WTC11 (cell line): ENCODE measurements at regions of chr3 and their contacts with region 1.

Region 1: GRCh38 chr3:45656575-45657363 is 32.4 kb upstream of the SACM1L start:
- DNase-seq: peak; percentile 87
- ATAC-seq: peak; percentile 92
- H3K4me3 Mint-ChIP-seq: no peak overlapping the region
- H3K27ac Mint-ChIP-seq: no peak overlapping the region; the same call in 1 of the 2 replicates
- H3K4me1 Mint-ChIP-seq: peaks cover 21% of the 10 kb centered on the region
- H3K27me3 Mint-ChIP-seq: no peaks in the 10 kb centered on the region
- CTCF ChIP-seq: peak; percentile 85

Region 2: GRCh38 chr3:45507820-45508317 is 148.9 kb before region 1 on chr3:
- CTCF ChIA-PET with region 1: interaction called, 98 read pairs
- POLR2A ChIA-PET with region 1: no interaction called
- DNase-seq: peak; percentile 60
- ATAC-seq: peak; percentile 66
- H3K4me3 Mint-ChIP-seq: no peak overlapping the region
- H3K27ac Mint-ChIP-seq: no peak overlapping the region
- H3K4me1 Mint-ChIP-seq: 0 out of 2 replicates have a peak, but pooled peaks cover 3% of the 10 kb centered on the region
- H3K27me3 Mint-ChIP-seq: no peaks in the 10 kb centered on the region
- CTCF ChIP-seq: 0 out of 2 replicates have a peak, but pooled peaks have one; percentile 13

Region 3: DNA sequence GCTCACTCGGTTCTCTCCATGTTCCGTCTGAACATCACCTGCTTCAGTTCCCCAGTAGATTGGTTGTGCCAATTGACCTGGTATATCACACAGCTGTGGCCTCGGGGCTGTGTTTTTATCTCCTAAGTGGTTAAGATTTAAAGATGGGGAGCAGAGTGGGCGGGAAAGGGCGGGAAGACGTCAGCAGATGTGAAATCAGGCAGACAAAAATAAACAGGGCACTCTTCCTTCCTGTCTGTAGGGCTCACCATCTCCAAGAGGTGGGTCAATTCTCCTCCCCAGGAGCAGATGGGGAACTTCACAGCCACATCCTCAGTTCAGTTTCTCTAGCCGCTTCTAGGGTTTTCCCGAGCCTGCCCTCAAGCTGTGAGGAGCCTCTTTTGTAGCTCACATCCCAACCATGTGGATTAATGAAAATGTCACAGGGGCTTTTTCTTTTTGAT is 89.0 kb before region 1 on chr3:
- CTCF ChIA-PET with region 1: interaction called, 17 read pairs
- POLR2A ChIA-PET with region 1: no interaction called
- DNase-seq: no peak
- ATAC-seq: no peak
- H3K4me3 Mint-ChIP-seq: no peak overlapping the region
- H3K27ac Mint-ChIP-seq: no peak overlapping the region
- H3K4me1 Mint-ChIP-seq: peaks cover 34% of the 10 kb centered on the region
- H3K27me3 Mint-ChIP-seq: peaks cover 3% of the 10 kb centered on the region; the same call in 1 of the 2 replicates
- CTCF ChIP-seq: no peak

Region 4: DNA sequence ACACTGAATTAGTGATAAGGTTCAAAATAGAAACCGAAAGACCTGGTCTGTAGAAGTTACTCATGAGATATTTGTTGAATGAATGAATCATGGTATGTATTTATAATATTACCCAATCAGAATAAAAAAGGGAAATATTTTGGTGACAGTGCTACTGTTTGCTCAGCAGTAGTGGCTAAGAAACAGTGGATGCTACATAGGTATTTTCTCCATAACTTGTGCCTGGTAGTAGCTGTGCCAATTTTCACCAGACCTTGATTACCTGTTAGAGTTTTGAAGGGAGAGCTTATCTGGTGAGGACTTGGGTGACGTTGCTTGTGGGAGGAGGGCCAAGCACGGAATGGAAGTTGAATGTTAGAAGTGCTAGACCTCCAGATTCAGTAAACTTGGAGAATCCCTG is 47.9 kb before region 1 on chr3:
- CTCF ChIA-PET with region 1: interaction called, 10 read pairs
- POLR2A ChIA-PET with region 1: no interaction called
- DNase-seq: no peak
- ATAC-seq: no peak
- H3K4me3 Mint-ChIP-seq: no peak overlapping the region
- H3K27ac Mint-ChIP-seq: peak overlapping the region; percentile 60; the same call in 1 of the 2 replicates
- H3K4me1 Mint-ChIP-seq: peaks cover 15% of the 10 kb centered on the region
- H3K27me3 Mint-ChIP-seq: no peaks in the 10 kb centered on the region
- CTCF ChIP-seq: no peak

Region 5: GRCh38 chr3:45644063-45644790 is 12.5 kb before region 1 on chr3:
- CTCF ChIA-PET with region 1: interaction called, 29 read pairs
- POLR2A ChIA-PET with region 1: no interaction called
- DNase-seq: no peak
- ATAC-seq: no peak
- H3K4me3 Mint-ChIP-seq: no peak overlapping the region
- H3K27ac Mint-ChIP-seq: peak overlapping the region; percentile 71
- H3K4me1 Mint-ChIP-seq: peaks cover 48% of the 10 kb centered on the region
- H3K27me3 Mint-ChIP-seq: no peaks in the 10 kb centered on the region
- CTCF ChIP-seq: no peak

Region 6: GRCh38 chr3:45688882-45689756 is 32.4 kb after region 1 on chr3 and contains the start of gene SACM1L:
- CTCF ChIA-PET with region 1: interaction called, 23 read pairs
- POLR2A ChIA-PET with region 1: interaction called, 3 read pairs
- DNase-seq: peak; percentile 97
- ATAC-seq: peak; percentile 79
- H3K4me3 Mint-ChIP-seq: peak within 1 kb of the TSS; percentile 84
- H3K27ac Mint-ChIP-seq: peak within 1 kb of the TSS; percentile 95
- H3K4me1 Mint-ChIP-seq: peaks cover 61% of the 10 kb centered on the region
- H3K27me3 Mint-ChIP-seq: peaks cover 4% of the 10 kb centered on the region
- CTCF ChIP-seq: no peak
- total RNA-seq, gene SACM1L: 79.0 to 80.3 TPM (median 79.6 TPM) in 3 replicates

Region 7: GRCh38 chr3:45861043-45861719 is 204.4 kb after region 1 on chr3:
- CTCF ChIA-PET with region 1: no interaction called
- POLR2A ChIA-PET with region 1: no interaction called
- DNase-seq: no peak
- ATAC-seq: no peak
- H3K4me3 Mint-ChIP-seq: no peak overlapping the region
- H3K27ac Mint-ChIP-seq: no peak overlapping the region
- H3K4me1 Mint-ChIP-seq: no peaks in the 10 kb centered on the region
- H3K27me3 Mint-ChIP-seq: peaks cover 26% of the 10 kb centered on the region
- CTCF ChIP-seq: no peak